ENCODE measurements at regions of chr15 and their contacts with region 1.

Region 1: DNA sequence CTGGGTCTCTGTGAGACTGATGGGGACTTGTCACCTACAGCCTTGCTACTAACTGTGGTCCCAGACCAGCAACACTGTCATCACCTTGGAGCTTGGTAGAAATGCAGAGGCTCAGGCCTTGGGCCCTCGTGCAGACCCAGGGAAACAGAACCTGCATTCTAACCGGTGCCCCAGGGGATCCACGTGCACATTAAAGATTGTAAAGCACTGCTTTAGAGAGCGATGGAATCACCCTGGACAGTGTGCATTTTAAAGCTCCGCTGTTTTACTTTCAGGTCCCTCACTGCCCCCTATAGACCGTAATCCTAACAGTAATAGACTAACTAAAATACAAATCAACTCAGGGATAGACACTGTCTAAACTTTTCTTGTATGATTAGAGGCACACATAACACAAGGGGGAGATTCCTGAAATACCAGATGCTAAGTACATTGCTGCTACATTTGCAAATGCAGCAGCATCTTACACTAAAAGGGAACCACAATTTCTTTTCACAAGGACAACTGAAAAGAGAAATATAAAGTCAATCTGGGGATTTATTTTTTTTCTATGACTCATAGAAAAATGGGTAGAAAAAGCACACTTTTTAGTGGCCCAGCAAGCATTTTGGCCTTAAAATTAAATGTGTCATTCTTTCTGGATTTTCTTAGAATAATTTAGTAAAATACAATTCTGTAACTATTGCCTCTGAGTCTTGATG is 10.5 kb upstream of the SH3GL3 start:
- DNase-seq: peak; percentile 83
- ATAC-seq: peak; percentile 76
- H3K4me3 ChIP-seq: no peak overlapping the region
- H3K27ac ChIP-seq: no peak overlapping the region
- H3K4me1 ChIP-seq: peaks cover 23% of the 10 kb centered on the region
- H3K27me3 ChIP-seq: no peaks in the 10 kb centered on the region
- CTCF ChIP-seq: peak; percentile 83

Region 2: GRCh38 chr15:83248151-83249029 is 188.2 kb before region 1 on chr15:
- CTCF ChIA-PET with region 1: interaction called, 20 read pairs
- POLR2A ChIA-PET with region 1: no interaction called
- intact Hi-C with region 1: loop called (anchors 1 kb)
- DNase-seq: peak; percentile 94
- ATAC-seq: peak; percentile 72
- H3K4me3 ChIP-seq: peak overlapping the region; percentile 43; the same call in 1 of the 2 replicates
- H3K27ac ChIP-seq: no peak overlapping the region
- H3K4me1 ChIP-seq: peaks cover 11% of the 10 kb centered on the region
- H3K27me3 ChIP-seq: no peaks in the 10 kb centered on the region
- CTCF ChIP-seq: peak; percentile 90

Region 3: GRCh38 chr15:83262594-83263315 is 173.9 kb before region 1 on chr15:
- CTCF ChIA-PET with region 1: no interaction called
- POLR2A ChIA-PET with region 1: interaction called, 16 read pairs
- intact Hi-C with region 1: no loop called
- DNase-seq: no peak
- ATAC-seq: no peak
- H3K4me3 ChIP-seq: no peak overlapping the region
- H3K27ac ChIP-seq: no peak overlapping the region
- H3K4me1 ChIP-seq: no peaks in the 10 kb centered on the region
- H3K27me3 ChIP-seq: no peaks in the 10 kb centered on the region
- CTCF ChIP-seq: no peak

Region 4: GRCh38 chr15:83380682-83381081 is 55.9 kb before region 1 on chr15:
- CTCF ChIA-PET with region 1: interaction called, 6 read pairs
- POLR2A ChIA-PET with region 1: no interaction called
- intact Hi-C with region 1: loop called (anchors 5 kb)
- DNase-seq: peak; percentile 78
- ATAC-seq: peak; percentile 44
- H3K4me3 ChIP-seq: no peak overlapping the region
- H3K27ac ChIP-seq: peak overlapping the region; percentile 99
- H3K4me1 ChIP-seq: peaks cover 48% of the 10 kb centered on the region
- H3K27me3 ChIP-seq: no peaks in the 10 kb centered on the region
- CTCF ChIP-seq: peak; percentile 63

Region 5: DNA sequence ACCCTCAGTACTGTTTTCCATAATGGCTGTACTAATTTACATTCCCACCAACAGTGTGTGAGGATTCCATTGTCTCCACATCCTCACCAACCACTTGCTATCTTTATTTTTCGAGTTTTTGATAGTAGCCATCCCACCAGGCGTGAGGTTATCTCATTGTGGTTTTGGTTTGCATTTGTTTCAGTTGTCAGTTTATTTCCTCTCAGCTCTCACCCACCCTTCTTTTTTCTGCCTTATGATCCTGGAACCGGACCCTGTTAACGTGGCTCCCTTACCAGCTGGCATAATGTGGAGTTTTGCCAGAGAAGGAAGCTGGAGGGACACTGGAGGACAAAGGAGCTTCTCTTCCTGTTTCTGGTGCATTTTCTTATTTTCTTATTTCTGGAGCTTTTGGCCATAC is 14.5 kb before region 1 on chr15:
- CTCF ChIA-PET with region 1: interaction called, 12 read pairs
- POLR2A ChIA-PET with region 1: no interaction called
- intact Hi-C with region 1: no loop called
- DNase-seq: no peak
- ATAC-seq: no peak
- H3K4me3 ChIP-seq: no peak overlapping the region
- H3K27ac ChIP-seq: no peak overlapping the region
- H3K4me1 ChIP-seq: no peaks in the 10 kb centered on the region
- H3K27me3 ChIP-seq: no peaks in the 10 kb centered on the region
- CTCF ChIP-seq: no peak

Region 6: GRCh38 chr15:83462953-83463433 is 26.4 kb after region 1 on chr15:
- CTCF ChIA-PET with region 1: interaction called, 13 read pairs
- POLR2A ChIA-PET with region 1: no interaction called
- intact Hi-C with region 1: no loop called
- DNase-seq: no peak
- ATAC-seq: no peak
- H3K4me3 ChIP-seq: no peak overlapping the region
- H3K27ac ChIP-seq: no peak overlapping the region
- H3K4me1 ChIP-seq: 0 out of 2 replicates have a peak, but pooled peaks cover 5% of the 10 kb centered on the region
- H3K27me3 ChIP-seq: no peaks in the 10 kb centered on the region
- CTCF ChIP-seq: no peak

Region 7: GRCh38 chr15:83559310-83559966 is 122.8 kb after region 1 on chr15:
- CTCF ChIA-PET with region 1: no interaction called
- POLR2A ChIA-PET with region 1: no interaction called
- intact Hi-C with region 1: loop called (anchors 1 kb)
- DNase-seq: peak; percentile 87
- ATAC-seq: peak; percentile 81
- H3K4me3 ChIP-seq: no peak overlapping the region
- H3K27ac ChIP-seq: no peak overlapping the region
- H3K4me1 ChIP-seq: no peaks in the 10 kb centered on the region
- H3K27me3 ChIP-seq: no peaks in the 10 kb centered on the region
- CTCF ChIP-seq: peak; percentile 94

Region 8: GRCh38 chr15:84099181-84099580 is 662.6 kb after region 1 on chr15:
- CTCF ChIA-PET with region 1: no interaction called
- POLR2A ChIA-PET with region 1: no interaction called
- intact Hi-C with region 1: no loop called
- DNase-seq: peak; percentile 7
- ATAC-seq: no peak
- H3K4me3 ChIP-seq: no peak overlapping the region
- H3K27ac ChIP-seq: no peak overlapping the region
- H3K4me1 ChIP-seq: no peaks in the 10 kb centered on the region
- H3K27me3 ChIP-seq: no peaks in the 10 kb centered on the region
- CTCF ChIP-seq: no peak